PC-3 (cell line): ENCODE measurements at regions of chr14 and their contacts with region 1.

Region 1: GRCh38 chr14:43169722-43170121 is 1337.4 kb downstream of the FSCB start:
- DNase-seq: no peak
- ATAC-seq: no peak
- H3K4me3 ChIP-seq: no peak overlapping the region
- H3K27ac ChIP-seq: no peak overlapping the region
- H3K4me1 ChIP-seq: peaks cover 8% of the 10 kb centered on the region
- H3K27me3 ChIP-seq: no peaks in the 10 kb centered on the region
- CTCF ChIP-seq: no peak

Region 2: DNA sequence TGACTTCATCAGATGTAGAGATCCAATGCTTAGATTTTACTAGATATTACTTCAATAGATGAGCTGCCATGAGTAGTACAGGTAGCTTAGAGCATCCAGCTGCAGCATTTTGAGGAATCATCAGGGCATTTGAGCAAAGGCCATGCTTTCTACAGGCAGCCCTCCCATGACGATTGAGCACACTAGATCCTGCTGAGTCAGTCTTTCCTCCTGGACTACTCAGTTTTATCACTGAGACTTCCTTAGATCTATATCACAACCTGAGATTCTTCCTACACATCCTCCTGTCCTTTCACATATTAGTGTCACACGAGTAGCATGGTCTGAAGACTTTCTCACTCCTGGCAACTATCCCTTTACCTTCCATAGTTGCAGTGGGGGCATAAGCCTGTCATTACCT is 64.4 kb before region 1 on chr14:
- CTCF ChIA-PET with region 1: no interaction called
- POLR2A ChIA-PET with region 1: no interaction called
- intact Hi-C with region 1: no loop called
- DNase-seq: peak; percentile 7
- ATAC-seq: peak; percentile 24; the same call in 1 of the 2 replicates
- H3K4me3 ChIP-seq: no peak overlapping the region
- H3K27ac ChIP-seq: no peak overlapping the region
- H3K4me1 ChIP-seq: no peaks in the 10 kb centered on the region
- H3K27me3 ChIP-seq: no peaks in the 10 kb centered on the region
- CTCF ChIP-seq: no peak

Region 3: GRCh38 chr14:43200519-43200918 is 30.8 kb after region 1 on chr14:
- CTCF ChIA-PET with region 1: no interaction called
- POLR2A ChIA-PET with region 1: no interaction called
- intact Hi-C with region 1: loop called (anchors 2 kb)
- DNase-seq: no peak
- ATAC-seq: no peak
- H3K4me3 ChIP-seq: no peak overlapping the region
- H3K27ac ChIP-seq: no peak overlapping the region
- H3K4me1 ChIP-seq: no peaks in the 10 kb centered on the region
- H3K27me3 ChIP-seq: no peaks in the 10 kb centered on the region
- CTCF ChIP-seq: no peak